ENCODE measurements at regions of chr13 and their contacts with region 1.

Region 1: DNA sequence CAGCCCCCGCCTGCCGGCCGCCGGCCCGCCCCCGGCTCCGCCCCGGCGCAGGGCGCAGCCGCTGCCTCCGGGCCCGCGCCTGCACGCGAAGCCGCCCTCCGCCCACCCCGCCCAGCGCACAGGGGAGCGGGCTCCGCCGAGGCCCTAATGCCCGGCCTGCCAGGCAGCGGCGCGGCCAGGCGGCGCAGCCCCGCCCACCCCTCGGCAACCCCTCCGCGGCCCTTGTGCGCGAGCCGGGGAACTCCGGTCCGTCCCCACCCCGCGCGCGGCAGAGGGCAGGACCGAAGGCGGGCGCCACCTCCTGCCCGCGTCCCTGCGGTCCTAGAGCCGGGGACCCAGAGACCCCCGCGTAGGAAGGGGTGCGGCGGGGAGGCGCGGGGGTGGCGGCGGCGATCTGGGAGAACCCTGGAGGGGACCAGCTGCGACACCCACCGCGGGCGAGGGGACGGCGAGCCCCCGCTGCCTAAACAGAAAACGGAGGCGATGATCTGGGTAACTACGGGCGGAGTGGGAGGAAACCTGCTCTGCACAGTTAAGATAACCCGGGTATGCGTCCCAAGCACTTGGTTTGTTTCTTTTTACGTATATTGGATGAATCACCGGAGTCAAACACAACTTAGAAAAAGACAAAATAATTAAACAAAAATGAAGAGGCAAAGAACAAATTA is 350 bp upstream of the USP12 start:
- DNase-seq: no peak
- ATAC-seq: peak; percentile 92
- H3K4me3 ChIP-seq: peak overlapping the region; percentile 69 to 70
- H3K27ac ChIP-seq: peak overlapping the region; percentile 88
- H3K4me1 ChIP-seq: peaks cover 30% of the 10 kb centered on the region
- H3K27me3 ChIP-seq: no peaks in the 10 kb centered on the region
- CTCF ChIP-seq: peak; percentile 3

Region 2: DNA sequence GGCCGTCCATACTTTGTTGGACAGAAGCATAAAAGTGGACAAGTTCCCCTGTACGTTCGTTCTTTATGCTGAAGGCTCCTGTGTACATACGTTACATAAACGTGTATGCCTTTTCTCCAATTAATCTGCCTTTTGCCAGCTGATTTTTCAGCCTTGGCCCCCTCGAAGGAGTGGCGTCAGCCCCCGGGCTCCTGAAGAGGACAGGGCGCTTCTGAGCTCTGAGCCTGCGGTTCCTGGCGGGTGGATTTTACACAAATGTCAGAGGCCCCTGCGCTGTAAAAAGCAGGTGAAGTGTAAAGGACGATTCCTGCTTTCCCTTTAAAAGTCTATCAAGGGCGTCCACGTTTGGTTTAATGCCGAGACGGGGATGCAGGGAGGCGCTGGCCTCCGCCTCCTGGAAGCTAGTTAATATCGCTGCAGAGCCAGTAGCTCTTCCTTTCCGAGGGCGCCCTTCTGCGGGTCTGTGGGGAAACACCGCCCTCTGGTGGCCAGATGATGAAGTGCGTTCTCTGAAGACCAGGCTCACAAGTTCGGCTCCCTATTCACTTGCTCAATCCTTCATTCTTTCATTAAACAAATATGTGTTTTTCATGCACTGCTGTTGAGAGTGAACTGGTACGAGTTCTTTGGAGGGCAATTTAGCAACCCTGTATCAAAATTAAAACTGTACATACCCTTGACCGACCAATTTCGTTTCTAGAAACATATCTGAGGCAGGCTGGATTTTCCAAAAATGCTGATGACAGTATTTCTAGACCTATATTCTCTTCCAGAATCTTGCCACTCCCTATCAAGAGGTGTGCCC is 473.4 kb before region 1 on chr13:
- CTCF ChIA-PET with region 1: no interaction called
- POLR2A ChIA-PET with region 1: no interaction called
- in situ Hi-C with region 1: no loop called
- intact Hi-C with region 1: no loop called
- DNase-seq: peak; percentile 57
- ATAC-seq: peak; percentile 91
- H3K4me3 ChIP-seq: peak overlapping the region; percentile 21 to 43
- H3K27ac ChIP-seq: no peak overlapping the region
- H3K4me1 ChIP-seq: peaks cover 3% of the 10 kb centered on the region; the same call in 1 of the 2 replicates
- H3K27me3 ChIP-seq: no peaks in the 10 kb centered on the region
- CTCF ChIP-seq: peak; percentile 90

Region 3: GRCh38 chr13:27130979-27131623 is 40.9 kb before region 1 on chr13:
- CTCF ChIA-PET with region 1: no interaction called
- POLR2A ChIA-PET with region 1: interaction called, 3 read pairs
- in situ Hi-C with region 1: no loop called
- intact Hi-C with region 1: loop called (anchors 5 kb)
- DNase-seq: peak; percentile 64
- ATAC-seq: peak; percentile 66
- H3K4me3 ChIP-seq: no peak overlapping the region
- H3K27ac ChIP-seq: peak overlapping the region; percentile 86
- H3K4me1 ChIP-seq: peaks cover 93% of the 10 kb centered on the region
- H3K27me3 ChIP-seq: no peaks in the 10 kb centered on the region
- CTCF ChIP-seq: no peak

Region 4: GRCh38 chr13:27242706-27243105 is 70.7 kb after region 1 on chr13:
- CTCF ChIA-PET with region 1: no interaction called
- POLR2A ChIA-PET with region 1: interaction called, 14 read pairs
- in situ Hi-C with region 1: no loop called
- intact Hi-C with region 1: no loop called
- DNase-seq: no peak
- ATAC-seq: no peak
- H3K4me3 ChIP-seq: no peak overlapping the region
- H3K27ac ChIP-seq: no peak overlapping the region
- H3K4me1 ChIP-seq: no peaks in the 10 kb centered on the region
- H3K27me3 ChIP-seq: no peaks in the 10 kb centered on the region
- CTCF ChIP-seq: no peak

Region 5: DNA sequence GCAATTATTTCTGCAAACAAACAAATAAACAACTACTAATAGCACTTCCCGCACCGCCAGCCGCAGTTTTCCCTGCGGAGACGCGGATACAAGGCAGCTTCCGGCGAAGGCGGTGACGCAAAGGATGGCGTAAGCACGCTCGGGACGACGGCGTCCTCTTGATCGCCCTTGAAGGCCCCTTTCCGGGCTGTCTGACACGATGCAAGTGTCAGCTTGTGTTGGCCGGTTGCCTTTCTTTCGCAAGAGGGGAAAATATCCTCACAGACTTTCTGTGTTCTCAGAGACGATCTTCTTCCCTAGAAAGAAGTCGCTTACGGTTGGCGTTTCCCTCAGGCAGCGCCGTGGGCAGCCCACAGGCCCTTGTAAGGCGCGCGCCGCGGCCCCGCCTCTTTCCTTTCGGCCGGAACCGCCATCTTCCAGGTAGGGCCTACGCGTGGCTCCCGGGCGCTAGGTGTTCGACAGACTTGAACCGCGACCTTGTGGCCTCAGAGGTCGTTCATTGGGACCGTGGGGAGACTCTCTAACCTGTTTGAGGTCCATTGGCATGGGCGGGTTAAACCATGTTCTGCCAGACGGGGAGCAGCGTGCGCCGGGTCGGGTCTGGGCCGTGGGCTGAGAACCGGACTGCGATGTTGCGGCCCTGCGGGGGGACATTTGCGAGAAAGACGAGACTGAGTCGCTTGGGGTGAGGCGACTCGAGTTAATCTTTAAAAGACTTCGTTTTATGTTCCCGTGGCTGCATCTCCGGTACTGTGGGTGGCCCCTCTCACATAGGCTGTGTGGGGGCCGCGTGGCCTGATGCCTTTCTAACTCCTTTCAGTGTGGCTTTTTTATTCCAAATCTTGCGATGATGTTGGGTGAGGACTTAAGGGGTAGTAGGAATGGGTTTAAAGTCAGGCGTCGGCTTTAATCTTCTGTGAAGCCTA is 79.5 kb after region 1 on chr13 and contains the start of gene RPL21:
- CTCF ChIA-PET with region 1: no interaction called
- POLR2A ChIA-PET with region 1: no interaction called
- in situ Hi-C with region 1: no loop called
- intact Hi-C with region 1: loop called (anchors 2 kb)
- DNase-seq: peak; percentile 87
- ATAC-seq: peak; percentile 98
- H3K4me3 ChIP-seq: peak within 1 kb of the TSS; percentile 97
- H3K27ac ChIP-seq: peak within 1 kb of the TSS; percentile 98
- H3K4me1 ChIP-seq: peaks cover 16% of the 10 kb centered on the region
- H3K27me3 ChIP-seq: no peaks in the 10 kb centered on the region
- CTCF ChIP-seq: no peak
- total RNA-seq, gene RPL21: 702 TPM

Region 6: GRCh38 chr13:27353166-27353583 is 181.2 kb after region 1 on chr13:
- CTCF ChIA-PET with region 1: no interaction called
- POLR2A ChIA-PET with region 1: no interaction called
- in situ Hi-C with region 1: no loop called
- intact Hi-C with region 1: loop called (anchors 5 kb)
- DNase-seq: no peak
- ATAC-seq: peak; percentile 74
- H3K4me3 ChIP-seq: peak overlapping the region; percentile 20 to 54
- H3K27ac ChIP-seq: peak overlapping the region; percentile 80
- H3K4me1 ChIP-seq: peaks cover 33% of the 10 kb centered on the region
- H3K27me3 ChIP-seq: no peaks in the 10 kb centered on the region
- CTCF ChIP-seq: no peak

Measured in Panc1 (cell line).